ENCODE measurements at regions of chr5 and their contacts with region 1.

Region 1: DNA sequence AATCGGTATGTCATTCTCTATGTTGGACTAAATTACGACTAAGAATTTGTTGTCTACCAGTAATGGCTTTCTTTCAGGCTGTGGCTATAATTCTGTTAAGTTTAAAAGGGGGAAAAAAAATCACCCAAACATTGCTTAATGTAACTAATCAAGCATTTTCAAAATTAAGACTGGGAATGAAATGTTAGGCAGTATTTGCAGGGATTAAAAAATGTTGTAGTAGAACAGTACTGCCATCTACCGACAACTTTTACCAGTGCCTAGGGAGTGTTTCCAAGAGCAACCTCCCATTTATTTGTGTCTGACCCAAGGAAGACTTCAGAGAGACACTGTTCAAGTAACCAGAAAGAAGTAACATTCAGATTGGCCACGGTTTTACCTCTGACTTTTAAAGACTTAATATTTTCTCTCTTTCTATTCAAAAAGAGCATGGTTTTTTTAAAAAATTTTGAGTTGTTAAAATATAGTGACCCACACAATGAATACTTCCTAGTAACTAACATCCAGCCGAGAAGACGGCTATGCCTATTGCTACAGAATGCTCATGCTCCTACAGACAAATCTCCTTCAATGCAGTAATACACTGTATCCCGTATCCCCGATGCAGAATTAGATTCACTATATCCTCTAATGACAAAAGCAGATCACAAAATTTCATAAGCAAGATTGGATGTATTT is 92.4 kb downstream of the ARL15 start:
- DNase-seq: peak; percentile 54
- ATAC-seq: peak; percentile 91
- H3K4me3 ChIP-seq: no peak overlapping the region
- H3K27ac ChIP-seq: no peak overlapping the region
- H3K4me1 ChIP-seq: no peaks in the 10 kb centered on the region
- H3K27me3 ChIP-seq: no peaks in the 10 kb centered on the region
- CTCF ChIP-seq: peak; percentile 75; the same call in 1 of the 2 replicates

Region 2: GRCh38 chr5:53170748-53171349 is 1047.1 kb before region 1 on chr5:
- CTCF ChIA-PET with region 1: no interaction called
- POLR2A ChIA-PET with region 1: no interaction called
- in situ Hi-C with region 1: no loop called
- intact Hi-C with region 1: loop called (anchors 2 kb)
- DNase-seq: peak; percentile 12
- ATAC-seq: peak; percentile 78; the same call in 1 of the 2 replicates
- H3K4me3 ChIP-seq: no peak overlapping the region
- H3K27ac ChIP-seq: no peak overlapping the region
- H3K4me1 ChIP-seq: no peaks in the 10 kb centered on the region
- H3K27me3 ChIP-seq: peaks cover 2% of the 10 kb centered on the region; the same call in 1 of the 2 replicates
- CTCF ChIP-seq: peak; percentile 77

Region 3: GRCh38 chr5:53262348-53262970 is 955.5 kb before region 1 on chr5:
- CTCF ChIA-PET with region 1: no interaction called
- POLR2A ChIA-PET with region 1: no interaction called
- in situ Hi-C with region 1: no loop called
- intact Hi-C with region 1: loop called (anchors 5 kb)
- DNase-seq: no peak
- ATAC-seq: no peak
- H3K4me3 ChIP-seq: no peak overlapping the region
- H3K27ac ChIP-seq: no peak overlapping the region
- H3K4me1 ChIP-seq: no peaks in the 10 kb centered on the region
- H3K27me3 ChIP-seq: no peaks in the 10 kb centered on the region
- CTCF ChIP-seq: peak; percentile 53; the same call in 1 of the 2 replicates

Region 4: DNA sequence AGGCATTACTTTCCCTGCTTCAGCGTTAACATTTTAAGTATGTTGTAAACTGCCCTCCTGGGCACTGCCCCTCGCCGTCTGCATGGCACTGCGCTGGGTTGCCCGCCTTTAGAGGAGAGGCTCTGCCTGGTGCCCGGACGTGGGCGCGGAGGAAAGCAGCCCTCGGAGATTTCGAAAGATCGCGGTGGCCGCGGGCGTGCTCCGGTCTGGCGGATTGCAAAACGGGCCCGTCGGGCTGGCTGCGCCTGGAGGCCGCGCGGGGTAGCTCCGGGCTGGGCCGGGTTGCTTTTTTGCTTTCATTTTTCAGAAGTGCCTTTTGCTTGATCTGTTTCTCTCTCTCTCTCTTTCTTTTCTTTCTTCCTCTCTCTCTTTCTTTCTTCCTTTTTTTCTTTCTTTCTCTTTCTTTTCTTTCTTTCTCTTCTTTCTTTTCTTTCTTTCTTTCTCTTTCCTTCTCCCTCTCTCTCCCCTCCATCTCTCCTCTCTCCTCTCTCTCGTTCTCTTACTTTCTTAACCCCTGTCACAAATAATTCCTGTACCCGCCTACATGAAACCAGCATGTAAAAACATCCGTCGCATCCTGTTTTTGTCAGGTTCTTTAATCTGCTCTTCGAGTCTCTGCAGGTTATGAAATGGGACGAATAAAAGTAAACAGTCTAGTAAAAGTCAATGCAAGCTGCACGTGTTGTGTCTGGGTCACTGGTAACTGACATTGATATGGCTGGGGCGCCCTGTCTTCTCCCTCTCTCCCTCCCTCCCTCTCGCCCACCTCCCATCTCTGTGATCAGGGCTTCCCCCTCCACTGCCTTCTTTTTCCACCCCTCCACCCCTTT is 735.9 kb before region 1 on chr5:
- CTCF ChIA-PET with region 1: no interaction called
- POLR2A ChIA-PET with region 1: no interaction called
- in situ Hi-C with region 1: no loop called
- intact Hi-C with region 1: loop called (anchors 5 kb)
- DNase-seq: no peak
- ATAC-seq: peak; percentile 59
- H3K4me3 ChIP-seq: peak overlapping the region; percentile 53 to 62
- H3K27ac ChIP-seq: no peak overlapping the region
- H3K4me1 ChIP-seq: peaks cover 12% of the 10 kb centered on the region
- H3K27me3 ChIP-seq: peaks cover 46% of the 10 kb centered on the region
- CTCF ChIP-seq: no peak

Region 5: GRCh38 chr5:54398191-54398590 is 180.2 kb after region 1 on chr5:
- CTCF ChIA-PET with region 1: no interaction called
- POLR2A ChIA-PET with region 1: no interaction called
- in situ Hi-C with region 1: no loop called
- intact Hi-C with region 1: no loop called
- DNase-seq: no peak
- ATAC-seq: no peak
- H3K4me3 ChIP-seq: no peak overlapping the region
- H3K27ac ChIP-seq: no peak overlapping the region
- H3K4me1 ChIP-seq: no peaks in the 10 kb centered on the region
- H3K27me3 ChIP-seq: no peaks in the 10 kb centered on the region
- CTCF ChIP-seq: no peak